ENCODE measurements at regions of chr6 and their contacts with region 1.

Region 1: DNA sequence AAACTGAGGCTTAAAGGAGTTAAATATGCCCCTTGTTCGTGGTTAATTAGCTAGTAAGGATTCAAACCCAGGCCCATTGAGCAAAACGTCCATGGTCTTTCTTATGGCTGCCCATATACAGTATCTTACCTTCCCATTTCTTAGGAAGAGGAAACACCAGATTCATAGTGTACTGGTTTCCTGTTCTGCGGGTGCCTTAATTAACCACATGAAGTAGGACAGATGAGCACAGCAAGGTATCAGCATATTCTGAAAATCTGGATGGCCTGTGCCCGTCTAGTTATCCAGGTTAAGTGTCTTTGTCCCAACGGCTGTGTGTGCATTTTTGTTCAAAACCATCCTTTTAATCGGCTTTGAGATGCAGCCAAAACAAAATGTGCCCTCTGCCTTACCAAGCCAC is 93.4 kb upstream of the TRAF3IP2 start:
- DNase-seq: no peak
- ATAC-seq: no peak
- H3K4me3 ChIP-seq: no peak overlapping the region
- H3K27ac ChIP-seq: no peak overlapping the region
- H3K4me1 ChIP-seq: no peaks in the 10 kb centered on the region
- H3K27me3 ChIP-seq: 0 out of 2 replicates have a peak, but pooled peaks cover 3% of the 10 kb centered on the region
- CTCF ChIP-seq: no peak

Region 2: GRCh38 chr6:111462770-111463391 is 236.2 kb before region 1 on chr6:
- CTCF ChIA-PET with region 1: interaction called, 15 read pairs
- POLR2A ChIA-PET with region 1: no interaction called
- in situ Hi-C with region 1: no loop called
- intact Hi-C with region 1: no loop called
- DNase-seq: peak; percentile 66
- ATAC-seq: peak; percentile 85
- H3K4me3 ChIP-seq: peak overlapping the region in 1 of 2 experiments; percentile 32; a peak in 2 of 4 replicates
- H3K27ac ChIP-seq: peak overlapping the region; percentile 85
- H3K4me1 ChIP-seq: peaks cover 40% of the 10 kb centered on the region
- H3K27me3 ChIP-seq: no peaks in the 10 kb centered on the region
- CTCF ChIP-seq: no peak

Region 3: GRCh38 chr6:111552241-111552744 is 146.8 kb before region 1 on chr6:
- CTCF ChIA-PET with region 1: no interaction called
- POLR2A ChIA-PET with region 1: no interaction called
- in situ Hi-C with region 1: no loop called
- intact Hi-C with region 1: no loop called
- DNase-seq: peak; percentile 46
- ATAC-seq: peak; percentile 79
- H3K4me3 ChIP-seq: peak overlapping the region in 1 of 2 experiments; percentile 30; a peak in 2 of 4 replicates
- H3K27ac ChIP-seq: peak overlapping the region; percentile 92
- H3K4me1 ChIP-seq: peaks cover 75% of the 10 kb centered on the region
- H3K27me3 ChIP-seq: no peaks in the 10 kb centered on the region
- CTCF ChIP-seq: no peak

Region 4: GRCh38 chr6:111888928-111889695 is 190.0 kb after region 1 on chr6:
- CTCF ChIA-PET with region 1: no interaction called
- POLR2A ChIA-PET with region 1: no interaction called
- in situ Hi-C with region 1: no loop called
- intact Hi-C with region 1: no loop called
- DNase-seq: no peak
- ATAC-seq: no peak
- H3K4me3 ChIP-seq: no peak overlapping the region
- H3K27ac ChIP-seq: no peak overlapping the region
- H3K4me1 ChIP-seq: no peaks in the 10 kb centered on the region
- H3K27me3 ChIP-seq: peaks cover 18% of the 10 kb centered on the region; the same call in 1 of the 2 replicates
- CTCF ChIP-seq: no peak

Measured in Panc1 (cell line).